Mammary epithelial cell (primary cell): ENCODE measurements at regions of chr1 and their contacts with region 1.

Region 1: DNA sequence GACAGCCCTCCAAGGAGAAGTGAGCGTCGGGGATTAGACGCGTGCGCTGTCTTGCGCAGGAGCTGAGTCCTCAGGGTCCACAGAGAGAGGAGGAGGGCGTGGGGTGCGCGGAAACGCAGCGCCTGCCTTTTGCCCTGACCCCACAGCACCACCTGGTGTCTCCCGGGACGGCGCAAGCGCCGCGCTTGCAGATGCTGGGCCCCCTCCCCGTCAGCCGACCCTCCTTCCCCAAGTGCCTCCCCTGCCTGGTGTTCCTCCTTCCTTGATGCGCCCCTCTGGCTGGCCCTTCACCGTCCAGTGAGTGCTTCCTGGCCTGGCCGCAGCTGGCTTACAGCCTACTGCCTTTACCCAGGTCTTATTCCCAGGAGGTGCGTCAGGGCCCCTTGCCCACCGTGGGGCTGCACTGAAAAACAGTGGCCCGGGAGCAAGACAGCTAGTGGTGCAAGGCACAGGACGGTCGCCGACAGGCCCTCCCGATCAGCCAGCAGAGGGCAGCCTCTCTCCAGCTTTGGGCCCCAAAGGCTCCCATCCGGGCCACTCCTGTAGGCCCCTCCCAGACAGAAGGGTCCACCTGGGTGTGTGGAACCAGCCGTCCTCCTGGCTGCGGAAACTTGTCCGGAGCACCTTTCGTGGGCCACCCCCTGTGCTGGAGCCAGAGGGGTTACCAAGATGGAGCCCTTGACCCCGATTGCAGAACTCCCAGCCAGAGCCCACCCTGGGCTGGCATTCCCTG is 12.9 kb upstream of the PHLDA3 start:
- DNase-seq: peak; percentile 68
- H3K4me3 ChIP-seq: peak overlapping the region in 1 of 3 experiments; percentile 7
- H3K27ac ChIP-seq: no peak overlapping the region
- H3K4me1 ChIP-seq: peaks cover 30% of the 10 kb centered on the region
- H3K27me3 ChIP-seq: no peaks in the 10 kb centered on the region
- CTCF ChIP-seq: peak; percentile 71 to 90

Region 2: DNA sequence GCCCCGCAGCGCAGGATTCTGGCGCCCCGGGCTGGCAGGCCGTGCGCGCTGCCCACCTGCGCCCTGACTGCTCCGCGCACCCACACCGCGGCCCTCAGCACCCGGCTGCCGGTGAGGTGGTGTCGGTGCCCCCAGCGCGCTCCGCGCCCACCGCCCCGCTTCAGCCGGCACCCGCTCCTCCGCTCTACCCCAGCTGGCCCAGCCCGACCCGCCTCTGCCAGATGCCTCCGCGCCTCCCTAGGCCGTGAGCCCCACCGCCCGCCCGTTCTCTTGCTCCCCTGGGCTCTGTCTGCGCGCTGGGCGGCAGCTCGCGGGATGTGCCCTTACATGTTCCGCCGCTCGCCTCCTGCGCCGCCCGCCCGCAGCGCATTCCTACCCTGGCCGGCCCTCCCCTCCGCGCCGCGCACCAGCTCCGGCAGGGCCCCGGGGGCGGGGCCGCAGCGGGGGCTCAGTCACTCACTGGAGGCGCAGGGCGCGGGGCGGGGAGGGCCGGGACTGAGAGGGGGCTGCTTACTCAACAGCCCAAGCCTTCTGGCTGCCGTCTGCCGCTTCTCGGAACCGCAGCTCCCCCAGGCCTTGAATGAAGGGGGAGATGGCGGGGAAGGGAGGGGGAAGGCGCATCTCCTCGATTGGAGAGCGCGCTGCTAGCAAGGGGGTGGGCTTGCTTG is 12.9 kb before region 1 on chr1 and contains the start of gene PHLDA3:
- CTCF ChIA-PET with region 1: no interaction called
- dilution Hi-C with region 1: no loop called
- in situ Hi-C with region 1: no loop called
- intact Hi-C with region 1: loop called (anchors 1 kb)
- DNase-seq: peak; percentile 93
- H3K4me3 ChIP-seq: peak within 1 kb of the TSS; percentile 85 to 100 (median 97)
- H3K27ac ChIP-seq: peak within 1 kb of the TSS; percentile 91
- H3K4me1 ChIP-seq: peaks cover 41% of the 10 kb centered on the region
- H3K27me3 ChIP-seq: no peaks in the 10 kb centered on the region
- CTCF ChIP-seq: no peak
- total RNA-seq, gene PHLDA3: 132 to 205 TPM

Region 3: DNA sequence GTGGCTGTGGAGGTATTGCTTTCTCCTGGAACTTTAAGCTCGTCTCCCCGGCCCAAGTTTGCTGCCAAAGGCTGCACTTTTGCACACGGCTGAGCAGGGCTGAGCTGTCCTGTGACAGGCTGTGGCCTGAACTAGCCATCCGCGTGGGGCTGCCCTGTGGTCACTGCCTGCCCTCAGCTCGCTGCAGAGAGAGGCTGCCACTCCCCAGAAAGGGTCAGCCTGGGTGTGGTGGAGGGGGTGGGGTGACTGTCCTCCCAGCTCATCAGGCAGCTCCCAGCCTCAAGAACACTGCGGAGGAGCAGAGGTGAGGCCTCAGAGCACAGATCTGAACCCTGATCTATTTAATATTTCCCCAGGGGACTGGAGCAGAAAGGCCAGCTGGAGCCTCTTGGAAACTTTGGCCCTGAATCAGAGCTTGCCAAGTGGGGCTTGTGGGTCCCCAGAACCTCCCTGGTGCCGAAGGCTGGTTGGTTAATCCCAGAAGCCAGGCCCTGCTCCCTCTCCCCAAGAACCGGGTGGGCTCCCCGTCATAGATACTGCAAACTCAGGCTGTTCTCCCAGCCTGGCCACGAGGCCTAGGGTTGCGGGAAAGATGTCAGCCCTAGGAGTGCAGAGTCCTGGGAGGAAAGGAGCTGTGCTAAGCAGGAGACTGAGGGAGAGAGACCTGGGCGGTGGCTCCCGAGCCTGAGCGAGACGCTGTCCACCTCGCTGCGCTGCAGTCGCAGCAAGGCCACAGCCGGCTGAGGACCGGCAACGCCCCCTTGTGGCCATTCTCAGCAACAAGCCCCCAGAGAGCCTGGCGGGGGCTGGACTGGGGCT is 221.9 kb after region 1 on chr1:
- CTCF ChIA-PET with region 1: no interaction called
- dilution Hi-C with region 1: no loop called
- in situ Hi-C with region 1: no loop called
- intact Hi-C with region 1: loop called (anchors 1 kb)
- DNase-seq: peak; percentile 54
- H3K4me3 ChIP-seq: no peak overlapping the region
- H3K27ac ChIP-seq: no peak overlapping the region
- H3K4me1 ChIP-seq: no peaks in the 10 kb centered on the region
- H3K27me3 ChIP-seq: no peaks in the 10 kb centered on the region
- CTCF ChIP-seq: peak; percentile 86 to 98

Region 4: DNA sequence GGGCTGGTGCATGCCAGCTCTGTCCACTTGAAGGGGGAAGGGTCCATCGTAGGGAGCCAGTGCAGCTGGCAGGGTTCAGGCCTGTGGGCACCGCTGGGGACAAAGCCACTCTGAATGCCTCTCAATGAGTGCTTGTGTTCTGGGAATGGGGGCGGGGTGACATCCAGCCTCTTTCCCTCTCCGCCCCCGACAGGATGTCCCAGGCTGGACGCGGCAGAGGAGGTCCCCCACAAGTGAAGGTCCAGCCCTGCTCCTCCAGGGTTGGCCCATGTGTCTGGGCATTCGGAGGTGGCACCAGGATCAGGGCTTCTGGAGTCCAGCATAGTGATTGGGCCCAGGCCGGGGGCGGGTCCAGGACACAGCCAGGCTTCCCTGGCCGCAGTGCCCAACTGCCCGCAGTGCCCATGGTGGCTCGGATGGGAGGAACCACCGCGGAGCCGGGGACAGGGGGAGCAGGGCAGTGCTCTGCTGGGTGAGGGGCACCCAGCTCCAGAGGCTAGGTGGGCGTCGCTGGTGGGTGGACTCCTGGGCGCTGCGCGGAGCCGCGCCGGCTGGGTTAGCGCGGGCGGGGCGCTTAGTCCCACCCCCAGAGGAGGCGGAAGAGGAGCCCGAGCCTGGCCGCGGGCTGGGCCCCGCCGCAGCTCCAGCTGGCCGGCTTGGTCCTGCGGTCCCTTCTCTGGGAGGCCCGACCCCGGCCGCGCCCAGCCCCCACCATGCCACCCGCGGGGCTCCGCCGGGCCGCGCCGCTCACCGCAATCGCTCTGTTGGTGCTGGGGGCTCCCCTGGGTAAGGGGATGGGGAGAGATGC is 406.6 kb after region 1 on chr1 and contains the start of gene SHISA4:
- CTCF ChIA-PET with region 1: no interaction called
- dilution Hi-C with region 1: no loop called
- in situ Hi-C with region 1: no loop called
- intact Hi-C with region 1: no loop called
- DNase-seq: peak; percentile 61
- H3K4me3 ChIP-seq: peak within 1 kb of the TSS; percentile 55 to 81 (median 64)
- H3K27ac ChIP-seq: no peak within 1 kb of the TSS
- H3K4me1 ChIP-seq: peaks cover 33% of the 10 kb centered on the region
- H3K27me3 ChIP-seq: no peaks in the 10 kb centered on the region
- CTCF ChIP-seq: no peak
- total RNA-seq, gene SHISA4: 11.7 to 18.3 TPM